Naive thymus-derived CD4-positive, alpha-beta T cell (primary cell): ENCODE measurements at regions of chr5 and their contacts with region 1.

Region 1: DNA sequence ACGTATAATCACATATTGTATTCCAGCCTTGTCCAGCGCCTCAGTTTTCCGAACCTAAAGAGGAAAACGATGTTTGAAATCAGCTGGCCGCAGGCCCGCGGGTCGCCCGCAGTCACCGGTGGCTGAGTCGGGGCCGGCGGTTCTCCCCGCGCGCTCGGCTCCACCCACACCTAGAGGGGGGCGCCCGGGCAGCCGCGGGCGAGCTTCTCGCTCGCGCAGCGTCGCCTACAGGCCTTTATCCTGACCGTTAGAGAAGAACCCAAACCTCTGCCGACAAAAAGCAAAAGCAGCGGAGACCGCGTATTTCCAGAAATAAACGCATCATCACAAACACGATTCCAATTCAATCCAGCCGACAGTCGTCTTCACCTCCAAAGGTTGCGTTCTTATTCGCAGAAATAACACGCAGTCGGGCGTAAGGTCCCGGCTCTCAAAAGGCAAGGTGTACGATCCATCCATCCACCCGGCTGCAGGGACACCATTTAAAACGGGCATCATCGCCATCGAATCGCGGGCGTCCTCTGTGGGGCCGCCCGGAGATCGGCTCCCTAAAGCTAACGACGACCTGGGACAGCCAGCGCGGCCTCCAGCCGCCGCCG is 680 bp upstream of the NIPBL start:
- DNase-seq: peak; percentile 59 to 79 (median 71)
- ATAC-seq: peak; percentile 76
- H3K4me3 ChIP-seq: peak overlapping the region; percentile 98
- H3K4me3 Mint-ChIP-seq: peak overlapping the region; percentile 88 to 97 (median 94)
- H3K27ac ChIP-seq: peak overlapping the region; percentile 98
- H3K27ac Mint-ChIP-seq: peak overlapping the region; percentile 91 to 99 (median 96)
- H3K4me1 ChIP-seq: peaks cover 23 to 29% of the 10 kb centered on the region in 2 donors
- H3K4me1 Mint-ChIP-seq: peaks cover 23 to 71% (median 62%) of the 10 kb centered on the region in 7 donors
- H3K27me3 ChIP-seq: no peaks in the 10 kb centered on the region
- H3K27me3 Mint-ChIP-seq: no peaks in the 10 kb centered on the region

Region 2: GRCh38 chr5:34929150-34929719 is 1946.7 kb before region 1 on chr5 and contains the start of gene DNAJC21:
- CTCF ChIA-PET with region 1: no interaction called
- POLR2A ChIA-PET with region 1: no interaction called
- intact Hi-C with region 1: loop called (anchors 2 kb)
- DNase-seq: peak; percentile 93 to 99 (median 97)
- ATAC-seq: peak; percentile 93
- H3K4me3 ChIP-seq: peak within 1 kb of the TSS; percentile 75
- H3K4me3 Mint-ChIP-seq: peak within 1 kb of the TSS; percentile 94 to 99 (median 96)
- H3K27ac ChIP-seq: peak within 1 kb of the TSS; percentile 93
- H3K27ac Mint-ChIP-seq: peak within 1 kb of the TSS; percentile 86 to 98 (median 94)
- H3K4me1 ChIP-seq: peaks cover 15 to 18% of the 10 kb centered on the region in 2 donors
- H3K4me1 Mint-ChIP-seq: peaks cover 19 to 44% (median 36%) of the 10 kb centered on the region in 7 donors
- H3K27me3 ChIP-seq: no peaks in the 10 kb centered on the region
- H3K27me3 Mint-ChIP-seq: no peaks in the 10 kb centered on the region
- total RNA-seq, gene DNAJC21: 43.9 to 66.4 (median 49.6) TPM

Region 3: DNA sequence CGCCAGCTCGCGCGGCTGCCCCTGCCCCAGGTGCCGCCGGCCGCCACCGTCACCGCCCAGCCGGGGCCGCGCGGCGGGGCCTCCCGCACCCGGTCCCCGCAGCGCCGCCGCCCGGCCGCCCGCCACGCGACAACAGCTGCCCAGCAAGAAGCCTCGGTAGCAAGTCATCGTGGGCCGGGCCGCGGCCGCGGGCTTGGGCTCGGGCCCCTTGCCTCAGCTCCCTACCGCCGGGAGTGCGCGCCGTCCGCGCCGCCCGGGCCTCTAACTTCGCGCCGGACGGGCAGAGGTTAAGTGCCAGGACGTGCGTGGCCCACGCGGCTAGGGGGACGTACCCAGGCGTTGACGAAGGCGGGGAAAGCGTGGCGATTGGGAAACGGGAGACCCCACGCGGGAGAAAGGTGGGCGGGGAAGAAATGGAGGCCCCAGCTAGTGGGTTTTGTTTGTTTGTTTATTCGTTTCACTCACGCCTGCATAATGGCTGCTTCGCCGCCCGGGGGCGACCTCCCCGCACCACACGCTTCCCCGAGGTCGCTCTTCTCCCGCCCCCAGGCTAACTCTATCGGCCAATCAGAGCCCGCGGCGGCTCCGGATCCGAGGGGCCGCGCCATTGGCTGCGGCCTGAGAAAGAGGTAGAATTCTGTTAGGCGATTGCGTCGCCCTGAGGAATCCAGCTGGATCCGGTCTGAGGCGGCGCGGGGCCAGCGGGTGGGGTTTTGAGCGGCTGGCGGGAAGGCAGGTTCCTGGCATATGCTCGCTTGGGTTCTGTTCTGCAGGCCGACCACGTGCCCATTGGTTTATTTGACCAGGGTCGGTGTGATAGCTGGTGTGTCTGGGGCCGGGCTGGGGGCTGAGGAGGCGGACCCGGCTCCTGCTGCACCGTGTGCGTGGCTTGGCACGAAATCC is 634.0 kb before region 1 on chr5 and contains the start of gene NADK2:
- CTCF ChIA-PET with region 1: no interaction called
- POLR2A ChIA-PET with region 1: interaction called, 18 read pairs
- intact Hi-C with region 1: loop called (anchors 1 to 2 kb)
- DNase-seq: peak; percentile 88 to 96 (median 93)
- ATAC-seq: peak; percentile 92
- H3K4me3 ChIP-seq: peak within 1 kb of the TSS; percentile 78
- H3K4me3 Mint-ChIP-seq: peak within 1 kb of the TSS; percentile 84 to 95 (median 92)
- H3K27ac ChIP-seq: peak within 1 kb of the TSS; percentile 97
- H3K27ac Mint-ChIP-seq: peak within 1 kb of the TSS; percentile 94 to 97 (median 95)
- H3K4me1 ChIP-seq: peaks cover 12 to 14% of the 10 kb centered on the region in 2 donors
- H3K4me1 Mint-ChIP-seq: peaks cover 24 to 64% (median 52%) of the 10 kb centered on the region in 7 donors
- H3K27me3 ChIP-seq: no peaks in the 10 kb centered on the region
- H3K27me3 Mint-ChIP-seq: peaks cover 0 to 5% (median 0%) of the 10 kb centered on the region in 5 donors
- total RNA-seq, gene NADK2: 11.3 to 17.8 (median 13.0) TPM

Region 4: GRCh38 chr5:36662291-36662851 is 213.5 kb before region 1 on chr5:
- CTCF ChIA-PET with region 1: no interaction called
- POLR2A ChIA-PET with region 1: no interaction called
- intact Hi-C with region 1: no loop called
- DNase-seq: no peak
- ATAC-seq: no peak
- H3K4me3 ChIP-seq: no peak overlapping the region
- H3K4me3 Mint-ChIP-seq: no peak overlapping the region
- H3K27ac ChIP-seq: no peak overlapping the region
- H3K27ac Mint-ChIP-seq: no peak overlapping the region
- H3K4me1 ChIP-seq: no peaks in the 10 kb centered on the region
- H3K4me1 Mint-ChIP-seq: no peaks in the 10 kb centered on the region
- H3K27me3 ChIP-seq: no peaks in the 10 kb centered on the region
- H3K27me3 Mint-ChIP-seq: peaks cover 6 to 16% (median 14%) of the 10 kb centered on the region in 5 donors

Region 5: GRCh38 chr5:36887532-36887931 is 11.6 kb after region 1 on chr5:
- CTCF ChIA-PET with region 1: no interaction called
- POLR2A ChIA-PET with region 1: interaction called, 8 read pairs
- intact Hi-C with region 1: loop called in 1 of 2 experiments (anchors 1 kb)
- DNase-seq: no peak
- ATAC-seq: no peak
- H3K4me3 ChIP-seq: no peak overlapping the region
- H3K4me3 Mint-ChIP-seq: peak overlapping the region in 9 of 10 donors; percentile 9 to 74 (median 55)
- H3K27ac ChIP-seq: no peak overlapping the region
- H3K27ac Mint-ChIP-seq: peak overlapping the region in 7 of 9 donors; percentile 0 to 70 (median 22)
- H3K4me1 ChIP-seq: peaks cover 28 to 35% of the 10 kb centered on the region in 2 donors
- H3K4me1 Mint-ChIP-seq: peaks cover 36 to 81% (median 67%) of the 10 kb centered on the region in 7 donors
- H3K27me3 ChIP-seq: no peaks in the 10 kb centered on the region
- H3K27me3 Mint-ChIP-seq: no peaks in the 10 kb centered on the region

Region 6: GRCh38 chr5:36944607-36945225 is 68.8 kb after region 1 on chr5:
- CTCF ChIA-PET with region 1: interaction called, 8 read pairs
- POLR2A ChIA-PET with region 1: interaction called, 4 read pairs
- intact Hi-C with region 1: loop called (anchors 1 to 2 kb)
- DNase-seq: peak in 7 of 9 donors; percentile 7 to 57 (median 47)
- ATAC-seq: peak; percentile 73
- H3K4me3 ChIP-seq: no peak overlapping the region
- H3K4me3 Mint-ChIP-seq: no peak overlapping the region
- H3K27ac ChIP-seq: no peak overlapping the region
- H3K27ac Mint-ChIP-seq: no peak overlapping the region
- H3K4me1 ChIP-seq: peaks cover 0 to 4% of the 10 kb centered on the region in 2 donors
- H3K4me1 Mint-ChIP-seq: peaks cover 10 to 80% (median 69%) of the 10 kb centered on the region in 7 donors
- H3K27me3 ChIP-seq: no peaks in the 10 kb centered on the region
- H3K27me3 Mint-ChIP-seq: no peaks in the 10 kb centered on the region

Region 7: GRCh38 chr5:37370864-37371726 is 495.2 kb after region 1 on chr5 and contains the start of gene NUP155:
- CTCF ChIA-PET with region 1: interaction called, 3 read pairs
- POLR2A ChIA-PET with region 1: interaction called, 5 read pairs
- intact Hi-C with region 1: loop called (anchors 1 kb)
- DNase-seq: peak; percentile 64 to 92 (median 87)
- ATAC-seq: peak; percentile 97
- H3K4me3 ChIP-seq: peak within 1 kb of the TSS; percentile 95
- H3K4me3 Mint-ChIP-seq: peak within 1 kb of the TSS; percentile 92 to 99 (median 94)
- H3K27ac ChIP-seq: peak within 1 kb of the TSS; percentile 89
- H3K27ac Mint-ChIP-seq: peak within 1 kb of the TSS; percentile 87 to 98 (median 96)
- H3K4me1 ChIP-seq: peaks cover 21 to 22% of the 10 kb centered on the region in 2 donors
- H3K4me1 Mint-ChIP-seq: peaks cover 27 to 48% (median 36%) of the 10 kb centered on the region in 7 donors
- H3K27me3 ChIP-seq: no peaks in the 10 kb centered on the region
- H3K27me3 Mint-ChIP-seq: no peaks in the 10 kb centered on the region
- total RNA-seq, gene NUP155: 21.3 to 51.2 (median 26.4) TPM